Endothelial cell of umbilical vein (primary cell): ENCODE measurements at regions of chr9 and their contacts with region 1.

Region 1: DNA sequence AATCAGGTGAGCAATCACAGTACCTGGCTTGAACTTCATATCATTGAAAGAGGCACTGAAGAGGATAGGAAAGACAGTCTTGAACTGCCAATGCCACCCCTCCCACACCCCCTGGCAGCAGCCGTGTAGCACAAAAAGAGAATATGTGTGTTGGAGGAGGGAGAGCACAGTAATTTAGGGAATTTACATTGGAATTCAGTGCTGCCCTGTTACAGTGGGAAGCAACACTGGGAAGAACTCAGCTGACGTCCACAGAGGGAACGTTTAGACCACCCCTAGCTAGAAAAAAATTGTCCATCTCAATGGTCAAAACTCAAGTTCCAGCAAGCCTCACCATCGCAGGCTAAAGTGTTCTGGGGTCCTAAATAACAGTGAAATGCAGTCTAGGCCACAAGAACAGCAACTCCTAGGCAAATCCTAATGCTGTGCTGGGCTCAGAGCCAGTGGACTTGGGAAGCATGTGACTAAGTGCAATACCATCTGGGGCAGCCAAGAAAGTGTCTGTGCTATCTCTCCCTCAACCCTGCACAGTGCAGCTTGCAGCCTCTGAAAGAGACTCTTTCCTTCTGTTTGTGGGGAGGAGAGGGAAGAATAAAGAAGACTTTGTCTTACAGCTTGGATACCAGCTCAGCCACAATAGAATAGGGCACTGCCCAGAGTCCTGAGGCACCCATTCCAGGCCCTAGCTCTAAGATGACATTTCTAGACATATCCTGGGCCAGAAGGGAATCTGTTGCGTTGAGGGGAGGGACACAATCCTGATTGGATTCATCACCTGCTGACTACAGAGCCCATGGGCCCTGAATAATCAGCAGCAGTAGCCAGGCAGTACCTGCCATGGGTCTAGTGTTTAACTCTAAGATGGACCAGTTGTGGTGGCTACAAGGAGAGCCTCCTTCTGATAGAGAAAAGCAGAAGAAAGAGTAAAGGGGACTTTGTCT is 62.1 kb upstream of the VLDLR start:
- DNase-seq: no peak
- H3K4me3 ChIP-seq: no peak overlapping the region
- H3K27ac ChIP-seq: no peak overlapping the region
- H3K4me1 ChIP-seq: no peaks in the 10 kb centered on the region
- H3K27me3 ChIP-seq: no peaks in the 10 kb centered on the region
- CTCF ChIP-seq: no peak
- POLR2A ChIP-seq: no peak

Region 2: DNA sequence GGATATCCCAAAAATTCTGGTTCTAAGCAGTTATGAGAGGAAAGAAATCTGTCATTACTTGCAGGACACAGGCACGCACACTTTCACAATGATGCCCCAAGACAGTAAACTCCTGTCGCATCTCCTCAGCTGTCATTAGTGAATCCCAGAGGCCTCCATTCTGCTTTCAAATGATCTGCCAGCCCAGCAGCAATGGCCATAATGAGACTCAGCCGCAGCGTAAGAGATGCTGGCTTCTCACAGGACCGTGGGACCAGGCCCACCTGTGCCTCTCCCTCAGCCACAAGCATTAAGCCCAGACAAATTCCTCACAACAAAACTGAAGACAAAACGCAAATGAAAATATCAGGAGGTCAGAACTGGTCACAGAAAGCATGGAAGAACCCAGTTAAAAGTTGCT is 35.9 kb before region 1 on chr9:
- CTCF ChIA-PET with region 1: no interaction called
- POLR2A ChIA-PET with region 1: no interaction called
- dilution Hi-C with region 1: no loop called
- intact Hi-C with region 1: loop called (anchors 2 kb)
- DNase-seq: no peak
- H3K4me3 ChIP-seq: no peak overlapping the region
- H3K27ac ChIP-seq: no peak overlapping the region
- H3K4me1 ChIP-seq: no peaks in the 10 kb centered on the region
- H3K27me3 ChIP-seq: no peaks in the 10 kb centered on the region
- CTCF ChIP-seq: no peak
- POLR2A ChIP-seq: no peak